Activated T-helper 1 cell treated with anti-CD3 and anti-CD28 coated beads, Interleukin-12 subunit alpha, Interleukin-12 subunit beta, Interleukin-2, Interleukin-4 antibody, amounts not matched to agents 30 ng/mL and 10 ng/mL and 1 ng/mL, durations not matched to agents 14 hours and 24 hours and 36 hours (primary cell): ENCODE measurements at regions of chr19 and their contacts with region 1.

Region 1: GRCh38 chr19:47745010-47745901 is at the start of gene NOP53:
- DNase-seq: peak; percentile 94
- H3K4me3 Mint-ChIP-seq: peak within 1 kb of the TSS; percentile 99
- H3K27ac Mint-ChIP-seq: peak within 1 kb of the TSS; percentile 100
- H3K4me1 Mint-ChIP-seq: peaks cover 37% of the 10 kb centered on the region
- H3K27me3 Mint-ChIP-seq: peaks cover 2% of the 10 kb centered on the region
- total RNA-seq, gene NOP53: 206 and 211 TPM in 2 replicates

Region 2: DNA sequence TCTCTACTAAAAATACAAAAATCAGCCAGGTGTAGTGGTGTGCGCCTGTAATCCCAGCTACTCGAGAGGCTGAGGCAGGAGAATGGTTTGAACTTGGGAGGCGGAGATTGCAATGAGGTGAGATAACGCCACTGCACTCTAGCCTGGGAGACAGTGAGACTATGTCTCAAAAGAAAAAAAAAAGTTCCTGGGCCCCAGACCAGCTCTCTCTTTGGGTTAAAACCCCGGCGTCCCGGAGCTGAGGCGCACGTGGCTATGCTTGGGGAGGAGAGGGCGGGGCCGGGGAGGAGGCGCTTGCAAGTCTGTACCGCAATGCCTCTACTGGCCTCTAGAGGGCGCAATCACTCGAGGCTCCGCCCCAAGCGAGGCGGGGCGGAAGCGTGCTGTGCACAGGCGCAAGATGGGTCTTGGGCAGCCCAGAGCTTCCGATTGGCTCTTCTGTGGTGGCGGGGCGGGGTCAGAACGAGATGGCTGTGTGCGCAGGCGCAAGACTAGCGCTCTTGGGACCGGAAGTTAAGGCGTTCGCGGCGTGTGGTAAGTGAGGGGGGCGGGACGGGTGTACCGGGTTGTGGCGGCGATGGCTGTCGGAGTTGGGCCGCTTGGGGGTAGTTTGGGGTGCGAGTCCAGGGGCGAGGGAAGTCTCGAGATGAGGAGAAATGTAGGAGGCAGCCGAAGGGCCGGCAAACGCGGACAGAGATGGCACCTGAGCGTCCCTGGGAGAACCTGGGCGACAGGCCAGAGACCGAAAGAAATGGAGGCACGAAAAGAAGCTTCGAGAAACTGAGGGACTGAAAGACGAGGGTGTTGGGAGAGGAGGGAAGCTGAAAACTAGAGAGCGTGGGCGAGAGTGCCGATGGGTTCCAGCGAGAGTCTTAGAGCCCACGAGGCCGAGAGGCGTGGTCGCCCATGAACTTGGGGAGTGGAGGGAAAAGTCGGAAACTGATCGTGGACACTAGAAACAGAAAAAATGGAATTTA is 396.1 kb before region 1 on chr19 and contains the start of gene DHX34:
- intact Hi-C with region 1: loop called (anchors 1 kb)
- DNase-seq: peak; percentile 100
- H3K4me3 Mint-ChIP-seq: peak within 1 kb of the TSS; percentile 93
- H3K27ac Mint-ChIP-seq: peak within 1 kb of the TSS; percentile 94
- H3K4me1 Mint-ChIP-seq: peaks cover 40% of the 10 kb centered on the region
- H3K27me3 Mint-ChIP-seq: no peaks in the 10 kb centered on the region
- total RNA-seq, gene DHX34: 31.1 and 33.9 TPM in 2 replicates

Region 3: DNA sequence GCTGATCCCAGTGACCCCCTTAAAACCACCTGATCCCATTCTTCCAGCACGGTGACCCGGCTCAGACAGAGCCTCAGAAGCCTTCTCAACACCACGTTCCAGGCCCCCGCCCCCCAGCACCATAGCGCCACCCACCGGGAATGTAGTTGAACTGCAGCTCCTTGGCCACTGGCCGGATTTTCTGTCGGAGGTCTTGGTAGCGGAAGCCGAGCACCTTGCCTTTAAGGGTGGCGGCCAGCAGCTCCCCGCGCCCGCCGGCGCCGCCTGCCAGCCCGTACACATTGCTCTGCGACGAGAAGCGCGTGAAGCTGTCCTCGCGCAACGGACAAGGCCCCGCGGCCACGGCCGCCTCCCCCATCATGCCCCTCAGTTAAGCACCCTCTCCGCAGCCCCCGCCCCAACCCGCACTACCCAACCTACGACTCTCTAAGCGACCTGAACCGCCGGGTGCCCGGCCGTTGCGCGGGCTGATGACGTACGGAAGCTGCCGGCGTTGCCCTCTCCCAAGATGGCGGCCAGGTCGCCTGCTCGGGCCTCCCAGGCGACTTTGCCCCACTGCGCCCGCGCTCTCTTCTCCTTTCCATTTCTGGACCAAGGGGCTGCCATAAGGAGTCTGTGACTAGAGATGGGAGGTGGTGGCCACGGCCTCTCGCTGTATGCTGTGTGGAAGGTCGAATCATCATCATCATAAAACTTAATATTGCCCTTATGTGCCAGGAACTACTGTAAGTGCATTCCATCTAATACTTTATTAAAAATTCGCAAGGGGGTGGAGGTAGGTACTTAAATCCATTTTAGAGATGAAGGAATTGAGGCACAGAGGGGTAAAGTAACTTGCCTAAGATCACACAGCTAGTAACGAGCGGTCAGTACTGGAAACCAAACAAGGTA is 261.2 kb before region 1 on chr19 and contains the start of gene KPTN:
- intact Hi-C with region 1: loop called (anchors 1 kb)
- DNase-seq: peak; percentile 86
- H3K4me3 Mint-ChIP-seq: peak within 1 kb of the TSS; percentile 99
- H3K27ac Mint-ChIP-seq: peak within 1 kb of the TSS; percentile 99
- H3K4me1 Mint-ChIP-seq: peaks cover 23% of the 10 kb centered on the region
- H3K27me3 Mint-ChIP-seq: peaks cover 4% of the 10 kb centered on the region
- total RNA-seq, gene KPTN: 9.6 and 10.8 TPM in 2 replicates

Region 4: GRCh38 chr19:47608074-47608918 is 137.0 kb before region 1 on chr19:
- intact Hi-C with region 1: loop called (anchors 2 kb)
- DNase-seq: peak; percentile 97
- H3K4me3 Mint-ChIP-seq: peak overlapping the region; percentile 87
- H3K27ac Mint-ChIP-seq: peak overlapping the region; percentile 62
- H3K4me1 Mint-ChIP-seq: peaks cover 23% of the 10 kb centered on the region
- H3K27me3 Mint-ChIP-seq: no peaks in the 10 kb centered on the region

Region 5: GRCh38 chr19:47707135-47707925 is 37.9 kb before region 1 on chr19:
- intact Hi-C with region 1: no loop called
- DNase-seq: peak; percentile 57
- H3K4me3 Mint-ChIP-seq: no peak overlapping the region
- H3K27ac Mint-ChIP-seq: no peak overlapping the region
- H3K4me1 Mint-ChIP-seq: no peaks in the 10 kb centered on the region
- H3K27me3 Mint-ChIP-seq: peaks cover 2% of the 10 kb centered on the region

Region 6: DNA sequence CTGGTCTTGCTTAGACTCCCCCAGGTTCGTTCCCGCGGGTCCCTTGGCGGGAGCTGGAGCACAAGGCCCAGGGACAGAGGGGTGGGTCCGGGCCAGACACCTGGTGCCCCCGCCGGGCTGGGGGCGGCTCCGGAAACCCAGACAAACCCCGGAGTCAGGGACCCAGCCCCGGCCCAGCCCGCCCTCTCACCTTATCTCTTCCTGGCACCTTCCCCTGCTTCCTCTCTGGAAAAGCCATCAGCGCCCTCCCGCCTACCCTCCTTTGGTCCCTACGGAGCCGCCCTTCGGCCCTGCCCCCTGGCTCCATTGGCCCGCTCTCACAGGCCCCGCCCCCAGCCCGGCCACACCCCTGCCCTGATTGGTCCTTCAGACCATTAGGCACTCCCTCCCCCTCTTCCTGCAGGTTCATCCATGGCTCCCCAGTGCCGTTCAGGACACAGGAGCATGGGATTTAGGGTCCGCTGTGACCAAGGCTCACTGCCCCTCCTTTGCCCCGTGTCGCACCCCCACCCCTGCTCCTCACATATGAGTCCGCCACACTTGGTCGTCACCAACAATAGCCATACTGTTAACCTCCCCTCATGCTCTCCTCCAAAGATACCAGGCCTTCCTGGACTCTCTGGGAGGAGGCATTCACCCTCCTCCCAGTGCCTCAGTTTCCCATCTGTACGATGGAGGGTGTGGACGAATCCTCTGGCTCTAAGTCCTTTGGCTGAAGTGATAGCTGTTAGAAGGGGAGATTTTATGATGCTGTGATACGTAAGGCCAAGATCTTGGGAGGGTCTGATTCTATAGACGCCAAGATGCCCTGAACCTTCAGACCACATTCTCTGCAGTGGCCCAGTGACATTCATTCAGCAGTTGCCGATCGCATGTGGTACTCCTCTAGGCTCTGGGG is 15.0 kb before region 1 on chr19:
- intact Hi-C with region 1: loop called (anchors 1 kb)
- DNase-seq: peak; percentile 50
- H3K4me3 Mint-ChIP-seq: peak overlapping the region; percentile 82
- H3K27ac Mint-ChIP-seq: peak overlapping the region; percentile 64
- H3K4me1 Mint-ChIP-seq: peaks cover 15% of the 10 kb centered on the region
- H3K27me3 Mint-ChIP-seq: peaks cover 5% of the 10 kb centered on the region